PC-3 (cell line): ENCODE measurements at regions of chr5 and their contacts with region 1.

Region 1: GRCh38 chr5:122704243-122705036 is 70.4 kb upstream of the SNX2 start:
- DNase-seq: peak; percentile 70
- ATAC-seq: peak; percentile 80
- H3K4me3 ChIP-seq: no peak overlapping the region
- H3K27ac ChIP-seq: no peak overlapping the region
- H3K4me1 ChIP-seq: no peaks in the 10 kb centered on the region
- H3K27me3 ChIP-seq: no peaks in the 10 kb centered on the region
- CTCF ChIP-seq: peak; percentile 83

Region 2: DNA sequence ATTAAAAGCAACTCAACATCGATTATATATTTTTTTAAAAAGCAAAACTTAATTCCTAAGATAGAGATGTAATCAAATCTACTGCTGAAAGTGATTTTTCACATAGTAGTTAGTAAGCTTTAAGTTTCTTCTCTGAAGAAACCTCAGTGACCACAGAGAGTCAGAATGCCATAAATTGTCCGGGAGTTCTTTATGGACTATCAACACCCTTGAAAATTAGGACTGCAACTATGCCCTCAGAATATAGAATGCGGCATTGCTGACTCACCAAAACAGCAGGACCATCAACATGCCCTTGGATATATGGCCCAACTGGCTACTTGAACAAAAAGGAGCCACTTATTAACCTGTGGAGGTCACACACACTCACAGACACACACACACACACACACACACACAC is 158.5 kb before region 1 on chr5:
- CTCF ChIA-PET with region 1: no interaction called
- POLR2A ChIA-PET with region 1: no interaction called
- intact Hi-C with region 1: no loop called
- DNase-seq: no peak
- ATAC-seq: no peak
- H3K4me3 ChIP-seq: no peak overlapping the region
- H3K27ac ChIP-seq: no peak overlapping the region
- H3K4me1 ChIP-seq: no peaks in the 10 kb centered on the region
- H3K27me3 ChIP-seq: peaks cover 22% of the 10 kb centered on the region; the same call in 1 of the 2 replicates
- CTCF ChIP-seq: no peak

Region 3: DNA sequence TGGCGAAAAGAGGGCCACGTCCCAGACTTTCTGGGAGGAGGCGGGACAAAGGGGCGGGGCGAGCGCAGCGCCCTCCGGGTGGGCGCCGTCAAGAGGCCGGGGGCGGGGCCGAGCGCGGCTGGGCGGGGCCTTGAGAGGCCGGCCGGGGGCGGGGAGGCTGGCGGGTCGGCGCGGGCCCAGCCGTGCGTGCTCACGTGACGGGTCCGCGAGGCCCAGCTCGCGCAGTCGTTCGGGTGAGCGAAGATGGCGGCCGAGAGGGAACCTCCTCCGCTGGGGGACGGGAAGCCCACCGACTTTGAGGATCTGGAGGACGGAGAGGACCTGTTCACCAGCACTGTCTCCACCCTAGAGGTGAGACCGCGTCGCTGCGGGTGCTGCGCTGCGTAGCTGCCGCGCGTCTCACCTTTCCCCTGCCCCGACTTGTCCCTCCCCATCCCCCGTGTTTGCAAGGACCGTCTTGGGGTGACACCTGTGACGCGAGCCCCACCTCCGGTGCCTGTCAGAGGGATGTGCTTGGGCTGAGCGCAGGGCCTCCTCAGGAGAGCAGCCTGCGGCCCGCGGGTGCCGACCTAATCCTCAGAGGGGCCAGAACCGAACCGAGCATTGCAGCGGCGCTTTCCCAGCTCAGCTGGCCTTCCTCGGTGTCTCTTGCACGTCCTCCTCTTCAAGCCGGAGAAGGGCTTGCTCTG is 70.6 kb after region 1 on chr5 and contains the start of gene SNX2:
- CTCF ChIA-PET with region 1: interaction called, 4 read pairs
- POLR2A ChIA-PET with region 1: interaction called, 3 read pairs
- intact Hi-C with region 1: loop called (anchors 1 kb)
- DNase-seq: peak; percentile 85
- ATAC-seq: peak; percentile 88
- H3K4me3 ChIP-seq: peak within 1 kb of the TSS; percentile 92
- H3K27ac ChIP-seq: no peak within 1 kb of the TSS
- H3K4me1 ChIP-seq: peaks cover 10% of the 10 kb centered on the region; the same call in 1 of the 2 replicates
- H3K27me3 ChIP-seq: no peaks in the 10 kb centered on the region
- CTCF ChIP-seq: peak; percentile 22; the same call in 1 of the 2 replicates
- total RNA-seq, gene SNX2: 30.5 and 33.7 TPM in 2 replicates

Region 4: GRCh38 chr5:122845229-122846050 is 141.0 kb after region 1 on chr5 and contains the start of gene SNX24:
- CTCF ChIA-PET with region 1: no interaction called
- POLR2A ChIA-PET with region 1: no interaction called
- intact Hi-C with region 1: loop called (anchors 5 kb)
- DNase-seq: peak; percentile 82
- ATAC-seq: peak; percentile 85
- H3K4me3 ChIP-seq: peak within 1 kb of the TSS; percentile 84
- H3K27ac ChIP-seq: peak within 1 kb of the TSS; percentile 43
- H3K4me1 ChIP-seq: peaks cover 47% of the 10 kb centered on the region
- H3K27me3 ChIP-seq: no peaks in the 10 kb centered on the region
- CTCF ChIP-seq: no peak
- total RNA-seq, gene SNX24: 7.4 and 10.3 TPM in 2 replicates

Region 5: DNA sequence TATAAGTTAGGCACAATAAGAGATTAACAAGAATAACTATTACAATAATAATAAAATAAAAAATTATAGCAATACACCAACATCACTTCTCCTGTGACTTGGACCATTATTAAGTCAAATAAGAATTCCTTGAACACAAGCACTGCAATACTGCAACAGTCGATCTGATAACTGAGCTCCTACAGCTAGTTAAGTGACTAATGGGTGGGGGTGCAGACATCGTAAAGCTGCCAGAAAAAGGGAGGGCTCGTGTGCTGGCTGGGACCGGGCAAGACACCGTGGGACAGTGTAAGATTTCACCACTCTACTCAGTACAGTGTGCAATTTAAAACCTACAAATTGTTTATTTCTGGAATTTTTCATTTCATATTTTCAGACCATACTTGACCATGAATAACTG is 219.8 kb after region 1 on chr5:
- CTCF ChIA-PET with region 1: no interaction called
- POLR2A ChIA-PET with region 1: no interaction called
- intact Hi-C with region 1: no loop called
- DNase-seq: no peak
- ATAC-seq: no peak
- H3K4me3 ChIP-seq: no peak overlapping the region
- H3K27ac ChIP-seq: no peak overlapping the region
- H3K4me1 ChIP-seq: no peaks in the 10 kb centered on the region
- H3K27me3 ChIP-seq: no peaks in the 10 kb centered on the region
- CTCF ChIP-seq: no peak

Region 6: GRCh38 chr5:123344816-123345426 is 640.5 kb after region 1 on chr5:
- CTCF ChIA-PET with region 1: no interaction called
- POLR2A ChIA-PET with region 1: no interaction called
- intact Hi-C with region 1: loop called (anchors 10 kb)
- DNase-seq: peak; percentile 34
- ATAC-seq: peak; percentile 46
- H3K4me3 ChIP-seq: no peak overlapping the region
- H3K27ac ChIP-seq: no peak overlapping the region
- H3K4me1 ChIP-seq: no peaks in the 10 kb centered on the region
- H3K27me3 ChIP-seq: no peaks in the 10 kb centered on the region
- CTCF ChIP-seq: peak; percentile 76

Region 7: DNA sequence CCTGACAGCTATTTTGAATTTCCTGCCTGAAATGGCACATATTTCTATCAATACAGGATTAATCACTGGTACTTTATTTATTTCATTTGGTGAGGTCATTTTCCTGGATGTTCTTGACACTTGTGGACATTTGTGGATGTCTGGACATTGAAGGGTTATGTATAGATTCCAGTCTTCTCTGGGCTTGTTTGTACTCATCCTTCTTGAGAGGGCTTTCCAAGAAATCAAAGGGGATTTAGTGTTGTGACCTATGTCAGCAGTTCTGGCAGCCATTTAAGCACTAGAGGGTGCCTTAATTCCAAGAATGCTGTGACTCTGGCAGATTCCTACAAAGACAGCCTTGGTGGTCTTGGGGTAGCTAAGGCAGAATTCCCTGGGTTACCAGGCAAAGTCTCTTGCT is 1067.3 kb after region 1 on chr5:
- CTCF ChIA-PET with region 1: no interaction called
- POLR2A ChIA-PET with region 1: no interaction called
- intact Hi-C with region 1: no loop called
- DNase-seq: no peak
- ATAC-seq: no peak
- H3K4me3 ChIP-seq: no peak overlapping the region
- H3K27ac ChIP-seq: no peak overlapping the region
- H3K4me1 ChIP-seq: no peaks in the 10 kb centered on the region
- H3K27me3 ChIP-seq: no peaks in the 10 kb centered on the region
- CTCF ChIP-seq: no peak